ENCODE measurements at regions of chr17 and their contacts with region 1.

Region 1: DNA sequence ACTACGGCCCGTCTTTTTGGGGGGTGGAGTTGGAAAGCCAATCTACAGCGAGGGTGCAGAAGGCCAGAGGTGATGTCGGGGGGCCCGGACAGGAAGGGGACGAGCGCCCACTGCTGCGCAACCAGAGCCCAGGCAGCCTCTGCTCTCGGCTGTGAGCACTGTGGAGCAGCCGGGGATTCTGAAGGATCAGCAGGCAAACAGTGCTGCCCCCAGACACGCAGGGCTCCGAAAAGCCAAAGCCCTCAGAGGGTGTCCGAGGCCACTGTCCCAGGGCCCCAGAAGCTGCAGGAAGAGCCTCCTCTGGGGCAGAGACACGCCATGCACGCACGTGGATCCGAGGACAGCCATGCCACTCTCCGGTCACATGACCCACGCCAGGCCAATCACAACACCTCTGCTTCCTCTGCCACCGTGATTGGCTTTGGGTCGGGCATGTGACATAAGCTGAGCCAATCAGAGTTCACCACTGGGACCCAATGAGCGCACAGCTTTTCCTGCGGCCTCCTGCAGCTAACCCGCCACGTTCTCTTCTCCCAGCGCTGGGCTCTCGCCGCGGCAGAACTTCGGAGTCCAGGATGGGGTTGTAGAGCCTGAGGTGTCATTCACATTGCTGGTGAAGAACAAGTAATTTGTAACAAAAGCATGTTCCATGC is 40.7 kb downstream of the ACTG1 start:
- DNase-seq: peak in 2 of 3 donors; percentile 74 to 77
- ATAC-seq: peak in 1 of 2 donors; percentile 23
- H3K4me3 ChIP-seq: no peak overlapping the region
- H3K27ac ChIP-seq: no peak overlapping the region
- H3K4me1 ChIP-seq: no peaks in the 10 kb centered on the region
- H3K27me3 ChIP-seq: no peaks in the 10 kb centered on the region

Region 2: GRCh38 chr17:81428948-81429774 is 42.8 kb before region 1 on chr17:
- intact Hi-C with region 1: loop called in 1 of 4 experiments (anchors 10 kb)
- DNase-seq: peak; percentile 81 to 95 (median 95)
- ATAC-seq: peak; percentile 77 to 78
- H3K4me3 ChIP-seq: no peak overlapping the region
- H3K27ac ChIP-seq: no peak overlapping the region
- H3K4me1 ChIP-seq: peaks cover 4% of the 10 kb centered on the region
- H3K27me3 ChIP-seq: no peaks in the 10 kb centered on the region

Region 3: GRCh38 chr17:81436294-81436849 is 35.6 kb before region 1 on chr17:
- intact Hi-C with region 1: loop called in 1 of 4 experiments (anchors 5 kb)
- DNase-seq: peak; percentile 60 to 91 (median 87)
- ATAC-seq: peak; percentile 48 to 66
- H3K4me3 ChIP-seq: no peak overlapping the region
- H3K27ac ChIP-seq: peak overlapping the region; percentile 56
- H3K4me1 ChIP-seq: peaks cover 2% of the 10 kb centered on the region
- H3K27me3 ChIP-seq: no peaks in the 10 kb centered on the region

Region 4: GRCh38 chr17:81527591-81528383 is 55.9 kb after region 1 on chr17 and contains the start of gene FSCN2:
- intact Hi-C with region 1: no loop called
- DNase-seq: peak in 2 of 3 donors; percentile 53 to 66
- ATAC-seq: peak in 1 of 2 donors; percentile 42
- H3K4me3 ChIP-seq: no peak within 1 kb of the TSS
- H3K27ac ChIP-seq: no peak within 1 kb of the TSS
- H3K4me1 ChIP-seq: no peaks in the 10 kb centered on the region
- H3K27me3 ChIP-seq: no peaks in the 10 kb centered on the region
- total RNA-seq, gene FSCN2: 0.45 to 0.63 (median 0.53) TPM

Region 5: DNA sequence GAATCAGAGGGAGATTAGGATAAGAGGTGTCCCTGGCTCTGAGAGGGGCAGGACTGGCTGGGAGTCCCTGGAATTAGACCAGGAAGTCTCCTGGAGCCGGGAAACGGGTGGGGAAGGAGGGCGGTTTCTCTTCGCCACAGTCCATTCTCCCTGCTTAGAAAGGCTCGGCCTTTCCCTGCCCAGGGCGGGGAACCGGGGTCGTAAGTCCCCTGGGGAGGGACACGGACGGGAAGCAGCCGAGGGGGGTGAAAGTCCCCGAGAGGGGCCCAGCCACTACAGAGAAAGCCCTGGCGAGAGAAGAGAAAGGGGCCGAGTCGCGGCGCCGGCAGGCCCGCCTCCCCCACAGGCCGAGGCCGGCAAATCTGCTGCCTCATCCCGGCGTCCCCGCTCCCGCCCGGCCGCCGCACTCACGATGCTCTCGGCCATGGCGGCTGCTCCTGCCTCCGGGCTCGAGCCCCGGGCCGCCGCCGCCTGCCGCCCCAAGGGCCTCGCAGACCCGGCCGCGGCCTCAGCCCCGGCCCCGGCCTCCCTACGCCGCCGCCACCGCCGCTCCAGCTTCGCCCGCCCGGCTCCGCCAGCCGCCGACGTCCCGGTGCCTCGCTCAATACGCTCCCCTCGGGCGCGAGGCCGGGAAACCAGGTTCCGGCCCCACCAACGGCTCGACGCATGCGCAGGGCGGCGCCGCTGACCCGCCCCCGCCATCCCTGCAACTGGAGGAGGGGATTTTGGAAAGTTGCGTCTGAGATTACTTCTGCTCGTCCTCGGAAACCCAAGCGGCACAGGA is 164.8 kb after region 1 on chr17 and contains the starts of genes NPLOC4 and TSPAN10:
- intact Hi-C with region 1: no loop called
- DNase-seq: peak; percentile 85 to 95 (median 94)
- ATAC-seq: peak; percentile 81 to 91
- H3K4me3 ChIP-seq: peak within 1 kb of the TSS; percentile 88
- H3K27ac ChIP-seq: peak within 1 kb of the TSS; percentile 88
- H3K4me1 ChIP-seq: peaks cover 4% of the 10 kb centered on the region
- H3K27me3 ChIP-seq: no peaks in the 10 kb centered on the region
- total RNA-seq, gene NPLOC4: 83.5 to 106 (median 89.5) TPM
- total RNA-seq, gene TSPAN10: 0.24 to 0.31 TPM in 2 of 4 donors, not detected in the others

Region 6: GRCh38 chr17:81702971-81703746 is 231.2 kb after region 1 on chr17 and contains the start of gene MRPL12:
- intact Hi-C with region 1: no loop called
- DNase-seq: peak; percentile 95 to 97 (median 97)
- ATAC-seq: peak; percentile 92 to 94
- H3K4me3 ChIP-seq: peak within 1 kb of the TSS; percentile 96
- H3K27ac ChIP-seq: peak within 1 kb of the TSS; percentile 91
- H3K4me1 ChIP-seq: peaks cover 6% of the 10 kb centered on the region
- H3K27me3 ChIP-seq: no peaks in the 10 kb centered on the region
- total RNA-seq, gene MRPL12: 83.3 to 142 (median 112) TPM

Measured in right cardiac atrium (tissue), 5 donors.